Panc1 (cell line): ENCODE measurements at regions of chr11 and their contacts with region 1.

Region 1: GRCh38 chr11:62841361-62842184 is 2.2 kb upstream of the WDR74 start:
- DNase-seq: peak; percentile 99
- ATAC-seq: peak; percentile 86
- H3K4me3 ChIP-seq: peak overlapping the region; percentile 28 to 53
- H3K27ac ChIP-seq: peak overlapping the region; percentile 96
- H3K4me1 ChIP-seq: peaks cover 12% of the 10 kb centered on the region
- H3K27me3 ChIP-seq: no peaks in the 10 kb centered on the region
- CTCF ChIP-seq: no peak

Region 2: DNA sequence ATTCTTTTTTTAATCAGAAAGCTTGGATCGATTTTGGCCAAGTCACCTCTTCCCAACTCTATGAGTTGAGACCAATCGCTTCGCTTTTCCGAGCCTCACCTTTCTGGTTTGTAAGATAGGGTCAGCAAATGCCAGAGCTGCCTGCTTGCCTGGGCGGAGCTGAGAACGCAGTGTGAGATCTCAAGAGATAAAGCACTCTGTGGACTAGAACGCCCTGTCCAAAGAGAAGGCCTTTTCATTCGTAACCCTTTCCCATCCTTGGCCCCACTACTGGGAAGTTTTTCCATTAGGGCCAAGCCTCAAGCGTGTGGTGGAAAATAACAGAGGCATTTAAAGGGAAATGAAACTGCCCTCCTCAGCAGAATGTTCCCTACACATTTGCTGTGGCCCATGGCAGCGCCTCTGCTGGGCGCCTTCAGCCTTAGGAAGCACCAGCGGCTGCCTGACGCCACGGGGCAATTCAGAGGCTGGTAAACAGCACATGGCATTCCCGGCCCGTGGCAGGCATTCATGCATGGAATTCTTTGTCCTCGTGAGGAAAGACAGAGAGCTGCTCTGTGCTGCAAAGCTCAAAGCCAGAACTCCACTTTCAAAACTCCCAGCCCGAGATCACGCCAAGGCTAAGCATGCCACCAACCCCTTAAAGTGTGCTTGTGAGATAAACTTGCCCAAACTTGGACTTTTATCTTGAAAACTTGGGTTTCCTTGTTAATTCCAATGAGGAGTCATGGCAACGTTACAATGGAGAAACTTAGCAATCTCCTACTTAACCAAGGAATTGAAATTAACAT is 333.1 kb before region 1 on chr11:
- CTCF ChIA-PET with region 1: no interaction called
- POLR2A ChIA-PET with region 1: interaction called, 13 read pairs
- in situ Hi-C with region 1: no loop called
- intact Hi-C with region 1: no loop called
- DNase-seq: peak; percentile 27
- ATAC-seq: peak; percentile 82
- H3K4me3 ChIP-seq: peak overlapping the region in 1 of 2 experiments; percentile 35; a peak in 2 of 4 replicates
- H3K27ac ChIP-seq: peak overlapping the region; percentile 99
- H3K4me1 ChIP-seq: peaks cover 93% of the 10 kb centered on the region
- H3K27me3 ChIP-seq: no peaks in the 10 kb centered on the region
- CTCF ChIP-seq: peak; percentile 83; the same call in 1 of the 2 replicates

Region 3: DNA sequence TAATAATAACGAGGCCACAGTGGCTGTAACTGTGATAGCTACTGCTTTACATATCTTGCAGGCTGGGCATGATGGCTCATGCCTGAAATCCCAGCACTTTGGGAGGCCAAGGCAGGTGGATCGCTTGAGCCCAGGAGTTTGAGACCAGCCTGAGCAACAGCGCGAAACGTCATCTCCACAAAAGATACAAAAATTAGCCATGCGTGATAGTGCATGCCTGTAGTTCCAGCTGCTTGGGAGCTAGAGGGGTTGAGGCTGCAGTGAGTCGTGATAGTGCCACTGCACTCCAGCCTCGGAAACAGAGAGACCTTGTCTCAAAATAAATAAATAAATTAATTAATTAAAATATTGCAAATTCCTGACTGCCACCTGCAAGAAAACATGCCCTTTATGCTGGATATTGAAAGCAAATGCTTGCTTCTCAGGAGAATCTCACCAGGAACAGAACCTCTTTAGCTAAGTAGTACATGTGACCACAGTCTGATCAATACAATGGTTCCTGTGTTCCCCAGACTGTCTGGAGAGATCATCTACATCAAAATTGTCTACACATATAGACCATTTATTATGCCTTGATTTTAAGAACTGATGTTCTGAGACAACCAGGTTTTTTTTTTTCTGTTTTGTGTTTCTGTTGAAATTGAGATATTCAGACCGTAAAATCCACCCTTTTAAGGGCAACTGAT is 94.0 kb before region 1 on chr11:
- CTCF ChIA-PET with region 1: no interaction called
- POLR2A ChIA-PET with region 1: interaction called, 14 read pairs
- in situ Hi-C with region 1: no loop called
- intact Hi-C with region 1: no loop called
- DNase-seq: no peak
- ATAC-seq: no peak
- H3K4me3 ChIP-seq: no peak overlapping the region
- H3K27ac ChIP-seq: no peak overlapping the region
- H3K4me1 ChIP-seq: no peaks in the 10 kb centered on the region; the same call in 1 of the 2 replicates
- H3K27me3 ChIP-seq: no peaks in the 10 kb centered on the region
- CTCF ChIP-seq: no peak

Region 4: GRCh38 chr11:62855571-62856332 is 14.2 kb after region 1 on chr11:
- CTCF ChIA-PET with region 1: interaction called, 3 read pairs
- POLR2A ChIA-PET with region 1: interaction called, 23 read pairs
- in situ Hi-C with region 1: no loop called
- intact Hi-C with region 1: no loop called
- DNase-seq: peak; percentile 92
- ATAC-seq: peak; percentile 93
- H3K4me3 ChIP-seq: peak overlapping the region; percentile 71 to 99
- H3K27ac ChIP-seq: peak overlapping the region; percentile 99
- H3K4me1 ChIP-seq: peaks cover 40% of the 10 kb centered on the region
- H3K27me3 ChIP-seq: no peaks in the 10 kb centered on the region
- CTCF ChIP-seq: no peak